MCF 10A (cell line): ENCODE measurements at regions of chr12 and their contacts with region 1.

Region 1: GRCh38 chr12:68259318-68259940 is 6.0 kb upstream of the IL22 start:
- DNase-seq: peak; percentile 86
- H3K4me3 Mint-ChIP-seq: peak overlapping the region; percentile 6
- H3K27ac Mint-ChIP-seq: peak overlapping the region; percentile 87
- H3K4me1 Mint-ChIP-seq: peaks cover 27% of the 10 kb centered on the region
- H3K27me3 Mint-ChIP-seq: no peaks in the 10 kb centered on the region
- CTCF ChIP-seq: no peak

Region 2: GRCh38 chr12:67541625-67541991 is 717.8 kb before region 1 on chr12:
- CTCF ChIA-PET with region 1: no interaction called
- POLR2A ChIA-PET with region 1: no interaction called
- intact Hi-C with region 1: no loop called
- DNase-seq: no peak
- H3K4me3 Mint-ChIP-seq: no peak overlapping the region
- H3K27ac Mint-ChIP-seq: peak overlapping the region; percentile 24
- H3K4me1 Mint-ChIP-seq: peaks cover 21% of the 10 kb centered on the region
- H3K27me3 Mint-ChIP-seq: no peaks in the 10 kb centered on the region
- CTCF ChIP-seq: no peak

Region 3: GRCh38 chr12:68119724-68120211 is 139.7 kb before region 1 on chr12:
- CTCF ChIA-PET with region 1: no interaction called
- POLR2A ChIA-PET with region 1: no interaction called
- intact Hi-C with region 1: no loop called
- DNase-seq: peak; percentile 16
- H3K4me3 Mint-ChIP-seq: no peak overlapping the region
- H3K27ac Mint-ChIP-seq: no peak overlapping the region
- H3K4me1 Mint-ChIP-seq: no peaks in the 10 kb centered on the region
- H3K27me3 Mint-ChIP-seq: no peaks in the 10 kb centered on the region
- CTCF ChIP-seq: no peak

Region 4: GRCh38 chr12:68148258-68148951 is 111.0 kb before region 1 on chr12:
- CTCF ChIA-PET with region 1: no interaction called
- POLR2A ChIA-PET with region 1: no interaction called
- intact Hi-C with region 1: no loop called
- DNase-seq: no peak
- H3K4me3 Mint-ChIP-seq: no peak overlapping the region
- H3K27ac Mint-ChIP-seq: no peak overlapping the region
- H3K4me1 Mint-ChIP-seq: no peaks in the 10 kb centered on the region
- H3K27me3 Mint-ChIP-seq: peaks cover 11% of the 10 kb centered on the region
- CTCF ChIP-seq: no peak

Region 5: DNA sequence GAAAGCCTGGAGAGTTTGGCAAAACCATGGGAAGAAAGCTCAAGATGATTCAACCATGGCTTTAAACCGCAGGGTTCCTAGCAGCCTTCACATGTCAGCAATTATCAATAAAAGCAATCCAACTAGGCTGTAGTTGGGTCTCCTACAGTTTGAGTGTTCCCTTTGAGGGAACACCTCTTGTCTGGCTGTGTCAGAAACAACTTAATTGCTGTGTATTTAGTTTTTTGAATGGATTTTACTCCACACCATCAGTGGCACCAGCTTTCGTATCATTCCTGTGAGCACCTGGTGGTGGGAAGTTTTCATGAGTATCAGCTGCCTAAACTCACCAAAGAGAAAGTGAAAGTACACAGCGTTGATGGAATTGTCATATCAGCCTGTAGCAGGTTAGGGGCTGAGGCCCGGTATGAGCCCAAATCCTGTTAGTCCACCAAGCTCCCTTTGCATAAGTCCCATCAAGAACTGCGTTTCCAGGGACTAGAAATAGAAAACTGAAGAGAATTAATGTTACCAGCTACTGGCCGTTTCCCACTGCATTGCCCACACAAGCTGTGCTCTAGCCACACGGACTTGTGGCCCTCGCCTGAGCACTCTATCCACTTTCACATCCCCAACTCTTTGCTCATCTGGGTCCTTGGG is 22.9 kb before region 1 on chr12:
- CTCF ChIA-PET with region 1: no interaction called
- POLR2A ChIA-PET with region 1: interaction called, 5 read pairs
- intact Hi-C with region 1: loop called (anchors 2 kb)
- DNase-seq: peak; percentile 48
- H3K4me3 Mint-ChIP-seq: peak overlapping the region; percentile 61
- H3K27ac Mint-ChIP-seq: peak overlapping the region; percentile 50
- H3K4me1 Mint-ChIP-seq: peaks cover 26% of the 10 kb centered on the region
- H3K27me3 Mint-ChIP-seq: no peaks in the 10 kb centered on the region
- CTCF ChIP-seq: no peak